Left colon (tissue), 2 donors: ENCODE measurements at regions of chr1 and their contacts with region 1.

Region 1: GRCh38 chr1:156383023-156383422 is 14.0 kb downstream of the RHBG start:
- DNase-seq: peak in 1 of 2 donors; percentile 65
- ATAC-seq: peak; percentile 91

Region 2: GRCh38 chr1:156245451-156246232 is 137.4 kb before region 1 on chr1:
- intact Hi-C with region 1: no loop called
- DNase-seq: peak in 1 of 2 donors; percentile 53
- ATAC-seq: peak; percentile 50

Region 3: GRCh38 chr1:156445789-156446263 is 62.8 kb after region 1 on chr1:
- intact Hi-C with region 1: loop called (anchors 2 to 5 kb)
- DNase-seq: peak; percentile 61 to 82
- ATAC-seq: peak; percentile 96

Region 4: DNA sequence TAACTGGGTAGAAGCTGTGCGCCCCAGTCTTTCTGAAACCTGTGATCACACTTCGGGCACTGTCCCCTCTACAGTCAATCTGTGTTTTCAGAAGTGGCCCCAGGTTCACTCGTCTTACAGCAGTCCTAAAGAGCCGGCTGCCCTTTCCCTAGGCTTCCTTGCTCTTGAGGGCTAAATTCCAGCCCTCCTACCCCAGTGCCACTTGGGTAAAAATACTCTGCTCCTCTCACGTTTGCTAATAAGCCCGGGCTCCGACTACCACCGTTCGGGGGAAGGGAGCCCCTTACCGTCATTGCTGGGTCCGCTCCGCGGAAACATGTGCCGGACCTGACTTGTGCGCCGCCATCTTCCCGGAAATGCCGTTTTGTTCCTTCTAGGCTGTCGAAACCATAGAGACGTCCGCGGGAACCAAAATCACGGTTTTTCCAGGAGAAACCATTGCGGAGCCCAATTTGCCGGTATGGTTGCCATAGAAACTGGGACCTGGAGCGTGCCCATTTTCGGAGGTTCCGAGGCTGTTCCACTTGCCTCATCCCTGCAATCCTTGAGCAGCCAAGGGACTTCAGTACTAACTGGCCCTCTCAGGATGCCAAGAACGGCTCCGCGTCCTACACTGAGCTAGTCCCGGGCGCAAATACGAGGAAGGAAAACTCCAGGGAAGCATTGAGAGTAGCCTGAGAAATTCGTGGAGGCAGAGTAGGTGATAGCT is 218.3 kb after region 1 on chr1 and contains the start of gene GPATCH4:
- intact Hi-C with region 1: loop called in 1 of 2 experiments (anchors 10 kb)
- DNase-seq: peak; percentile 71 to 82
- ATAC-seq: peak; percentile 87
- total RNA-seq, gene GPATCH4: 13.8 to 20.1 TPM